Prostate gland (tissue), 2 donors: ENCODE measurements at regions of chr12 and their contacts with region 1.

Region 1: DNA sequence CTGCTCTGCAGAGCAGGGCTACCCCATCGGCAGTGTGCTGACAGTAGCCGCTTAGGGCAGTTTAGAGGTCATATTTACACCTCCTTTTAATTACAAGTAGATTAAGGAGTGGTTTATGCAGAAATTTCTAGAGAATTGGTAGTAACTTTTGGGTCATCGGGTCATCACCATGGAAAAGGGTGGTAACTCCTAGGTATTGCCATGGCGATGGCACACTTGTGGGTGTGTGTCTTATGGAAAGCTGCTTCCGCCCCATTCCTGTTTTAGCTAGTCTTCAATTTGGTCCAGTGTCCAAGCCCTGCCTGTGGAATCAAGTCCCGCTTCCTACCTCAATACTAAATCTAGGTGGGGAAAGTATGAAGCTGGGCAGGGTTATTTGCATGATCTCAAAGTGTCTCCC is 29.5 kb upstream of the ZNF740 start:
- DNase-seq: no peak
- H3K4me3 ChIP-seq: no peak overlapping the region
- H3K27ac ChIP-seq: no peak overlapping the region
- H3K4me1 ChIP-seq: no peaks in the 10 kb centered on the region
- H3K27me3 ChIP-seq: no peaks in the 10 kb centered on the region
- CTCF ChIP-seq: no peak
- POLR2A ChIP-seq: no peak

Region 2: DNA sequence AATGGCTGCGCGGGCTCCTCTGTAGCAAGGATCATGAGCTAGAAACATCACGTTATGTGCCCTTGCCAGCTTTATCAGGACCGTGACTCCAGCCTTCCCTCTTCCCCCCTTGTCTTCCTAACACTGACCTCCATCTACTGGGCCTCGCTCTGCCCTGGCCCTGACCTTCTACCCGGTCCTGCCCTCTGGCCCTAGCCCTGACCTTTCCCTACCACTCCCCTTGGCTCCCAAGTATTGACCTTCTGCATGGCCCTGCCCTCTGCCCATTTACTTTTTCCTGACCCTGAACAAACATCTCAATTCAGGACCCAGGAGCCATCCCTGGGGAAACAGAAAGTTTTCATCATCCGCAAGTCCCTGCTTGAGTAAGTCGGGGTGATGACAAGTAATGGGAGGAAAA is 45.8 kb before region 1 on chr12:
- intact Hi-C with region 1: loop called (anchors 5 kb)
- DNase-seq: no peak
- H3K4me3 ChIP-seq: no peak overlapping the region
- H3K27ac ChIP-seq: no peak overlapping the region
- H3K4me1 ChIP-seq: no peaks in the 10 kb centered on the region
- H3K27me3 ChIP-seq: no peaks in the 10 kb centered on the region
- CTCF ChIP-seq: no peak
- POLR2A ChIP-seq: no peak